PC-3 (cell line): ENCODE measurements at regions of chr7 and their contacts with region 1.

Region 1: GRCh38 chr7:91314591-91315323 is 50.5 kb downstream of the FZD1 start:
- DNase-seq: peak; percentile 71
- ATAC-seq: peak; percentile 83
- H3K4me3 ChIP-seq: no peak overlapping the region
- H3K27ac ChIP-seq: no peak overlapping the region
- H3K4me1 ChIP-seq: peaks cover 7% of the 10 kb centered on the region
- H3K27me3 ChIP-seq: peaks cover 11% of the 10 kb centered on the region; the same call in 1 of the 2 replicates
- CTCF ChIP-seq: no peak

Region 2: GRCh38 chr7:91264046-91264923 is 50.5 kb before region 1 on chr7 and contains the start of gene FZD1:
- CTCF ChIA-PET with region 1: no interaction called
- POLR2A ChIA-PET with region 1: no interaction called
- intact Hi-C with region 1: loop called (anchors 2 kb)
- DNase-seq: peak; percentile 95
- ATAC-seq: peak; percentile 78
- H3K4me3 ChIP-seq: peak within 1 kb of the TSS; percentile 78
- H3K27ac ChIP-seq: no peak within 1 kb of the TSS
- H3K4me1 ChIP-seq: peaks cover 10% of the 10 kb centered on the region
- H3K27me3 ChIP-seq: no peaks in the 10 kb centered on the region
- CTCF ChIP-seq: no peak
- total RNA-seq, gene FZD1: 2.7 and 3.1 TPM in 2 replicates